ENCODE measurements at regions of chr22 and their contacts with region 1.

Region 1: DNA sequence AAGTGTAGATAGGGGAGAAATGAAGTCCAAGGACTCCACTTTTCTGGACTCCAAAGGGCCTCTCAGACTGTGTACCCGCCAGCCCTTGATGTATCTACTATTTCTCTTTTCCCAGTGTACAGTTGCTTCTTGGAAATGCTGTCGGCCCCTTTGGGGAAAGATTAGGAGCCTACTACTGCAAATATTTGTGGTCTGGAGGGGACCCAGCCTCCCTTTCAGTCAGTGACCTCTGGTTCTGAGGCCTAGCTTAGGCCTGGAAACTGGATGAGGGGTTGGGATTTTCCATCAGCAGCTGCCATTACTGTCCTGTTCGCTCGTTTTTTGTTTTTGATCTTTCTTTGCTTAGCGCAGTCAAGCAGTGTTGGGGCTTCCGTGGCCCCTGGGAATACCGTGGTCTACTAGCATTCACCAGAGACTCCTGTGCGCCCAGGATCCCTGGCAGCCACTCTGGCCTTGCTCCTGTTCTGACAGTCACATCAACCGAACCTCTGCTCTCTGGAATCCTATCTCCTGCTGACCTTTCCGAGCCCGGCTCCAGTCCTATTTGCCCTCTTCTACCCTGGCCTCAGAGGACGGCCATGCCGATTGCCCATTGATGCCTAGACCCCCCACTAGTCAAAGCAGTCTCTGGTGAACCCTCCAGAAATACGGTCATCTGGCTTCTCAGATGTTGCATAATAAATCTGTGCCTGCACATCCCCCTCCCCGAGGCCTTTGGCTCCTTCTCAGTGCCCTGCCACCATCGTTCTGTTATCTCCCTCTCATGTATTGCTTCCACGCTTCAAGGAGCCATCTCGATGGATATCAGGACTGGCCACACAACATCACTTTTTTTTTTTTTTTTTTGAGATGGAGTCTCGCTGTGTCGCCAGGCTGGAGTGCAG is 1.3 kb upstream of the RRP7A start:
- DNase-seq: no peak
- ATAC-seq: no peak
- H3K4me3 Mint-ChIP-seq: no peak overlapping the region
- H3K27ac Mint-ChIP-seq: no peak overlapping the region
- H3K4me1 Mint-ChIP-seq: peaks cover 9% of the 10 kb centered on the region
- H3K27me3 Mint-ChIP-seq: no peaks in the 10 kb centered on the region

Region 2: DNA sequence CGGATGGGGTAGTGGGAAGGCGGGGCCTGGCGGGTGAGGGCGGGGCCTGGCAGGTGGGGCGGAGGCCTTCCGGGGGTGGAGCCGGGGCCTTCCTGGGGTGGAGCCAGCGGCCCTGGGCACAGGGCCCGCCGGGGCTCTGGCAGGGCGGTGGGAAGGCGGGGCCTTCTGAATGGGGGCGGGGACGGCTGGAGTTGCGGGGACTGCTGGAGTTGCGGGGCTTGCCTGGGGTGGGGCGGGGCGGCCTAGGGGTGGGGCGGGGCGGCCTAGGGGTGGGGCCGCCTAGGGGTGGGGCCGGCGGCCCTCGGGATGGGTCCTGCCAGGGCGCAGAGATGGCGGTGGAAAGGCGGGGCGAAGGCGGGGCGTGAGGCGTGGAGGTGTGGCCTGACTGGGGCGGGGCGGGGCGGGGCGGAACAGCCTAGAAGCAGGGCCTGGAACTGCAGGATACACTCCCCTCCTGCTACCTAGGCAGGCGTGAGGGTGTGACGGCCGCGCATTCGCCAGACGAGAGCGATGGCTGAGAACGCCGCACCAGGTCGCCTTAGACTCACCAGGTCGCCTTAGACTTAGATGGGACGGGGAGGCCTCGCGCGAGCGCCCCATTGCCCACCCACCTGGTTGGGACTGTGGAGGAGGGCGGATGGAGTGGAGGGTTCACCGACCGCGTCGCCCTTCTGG is 20.6 kb before region 1 on chr22:
- CTCF ChIA-PET with region 1: no interaction called
- POLR2A ChIA-PET with region 1: no interaction called
- intact Hi-C with region 1: loop called in 1 of 2 experiments (anchors 2 kb)
- DNase-seq: peak; percentile 91
- ATAC-seq: peak; percentile 98
- H3K4me3 Mint-ChIP-seq: peak overlapping the region; percentile 38
- H3K27ac Mint-ChIP-seq: no peak overlapping the region
- H3K4me1 Mint-ChIP-seq: peaks cover 11% of the 10 kb centered on the region
- H3K27me3 Mint-ChIP-seq: no peaks in the 10 kb centered on the region

Region 3: DNA sequence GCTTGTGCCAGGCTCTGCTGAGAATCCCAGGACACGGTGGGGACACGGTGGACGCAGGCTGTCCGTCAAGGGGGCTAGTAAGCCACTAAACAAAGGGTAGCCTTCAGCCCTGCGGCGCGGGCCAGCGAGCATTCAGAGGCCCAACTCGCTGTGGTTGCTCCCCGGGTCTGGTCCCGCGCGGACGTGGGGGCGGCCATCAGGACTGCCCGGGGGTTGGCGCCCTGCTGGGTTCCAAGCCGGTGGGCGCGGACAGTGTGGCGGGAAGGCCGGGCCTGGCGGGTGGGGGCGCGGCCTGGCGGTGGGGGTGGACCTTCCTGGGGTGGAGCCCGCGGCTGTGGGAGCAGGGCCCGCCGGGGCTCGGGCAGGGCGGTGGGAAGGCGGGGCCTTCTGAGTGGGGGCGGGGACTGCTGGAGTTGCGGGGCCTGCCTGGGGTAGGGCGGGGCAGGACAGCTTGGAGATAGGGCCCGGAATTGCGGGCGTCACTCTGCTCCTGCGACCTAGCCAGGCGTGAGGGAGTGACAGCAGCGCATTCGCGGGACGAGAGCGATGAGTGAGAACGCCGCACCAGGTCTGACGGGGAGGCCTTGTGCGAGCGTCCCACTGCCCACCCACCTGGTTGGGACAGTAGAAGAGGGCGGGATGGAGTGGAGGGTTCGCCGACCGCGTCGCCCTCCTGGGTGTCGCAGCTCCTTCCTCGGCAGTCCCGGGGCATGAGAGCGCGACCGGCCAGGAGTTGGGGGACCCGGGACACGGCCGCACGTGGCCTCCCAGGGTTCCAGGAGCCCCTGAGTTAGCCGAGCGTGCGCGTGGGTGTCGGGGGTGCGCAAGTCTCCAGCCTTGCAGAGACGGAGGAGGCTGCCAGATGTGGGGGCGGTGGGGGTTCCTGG is 32.8 kb after region 1 on chr22 and contains the start of gene SERHL2:
- CTCF ChIA-PET with region 1: no interaction called
- POLR2A ChIA-PET with region 1: no interaction called
- intact Hi-C with region 1: loop called in 1 of 2 experiments (anchors 2 kb)
- DNase-seq: peak; percentile 91
- ATAC-seq: peak; percentile 99
- H3K4me3 Mint-ChIP-seq: peak within 1 kb of the TSS; percentile 69
- H3K27ac Mint-ChIP-seq: peak within 1 kb of the TSS; percentile 51
- H3K4me1 Mint-ChIP-seq: peaks cover 6% of the 10 kb centered on the region
- H3K27me3 Mint-ChIP-seq: no peaks in the 10 kb centered on the region
- total RNA-seq, gene SERHL2: 0.78 to 2.1 TPM

Region 4: DNA sequence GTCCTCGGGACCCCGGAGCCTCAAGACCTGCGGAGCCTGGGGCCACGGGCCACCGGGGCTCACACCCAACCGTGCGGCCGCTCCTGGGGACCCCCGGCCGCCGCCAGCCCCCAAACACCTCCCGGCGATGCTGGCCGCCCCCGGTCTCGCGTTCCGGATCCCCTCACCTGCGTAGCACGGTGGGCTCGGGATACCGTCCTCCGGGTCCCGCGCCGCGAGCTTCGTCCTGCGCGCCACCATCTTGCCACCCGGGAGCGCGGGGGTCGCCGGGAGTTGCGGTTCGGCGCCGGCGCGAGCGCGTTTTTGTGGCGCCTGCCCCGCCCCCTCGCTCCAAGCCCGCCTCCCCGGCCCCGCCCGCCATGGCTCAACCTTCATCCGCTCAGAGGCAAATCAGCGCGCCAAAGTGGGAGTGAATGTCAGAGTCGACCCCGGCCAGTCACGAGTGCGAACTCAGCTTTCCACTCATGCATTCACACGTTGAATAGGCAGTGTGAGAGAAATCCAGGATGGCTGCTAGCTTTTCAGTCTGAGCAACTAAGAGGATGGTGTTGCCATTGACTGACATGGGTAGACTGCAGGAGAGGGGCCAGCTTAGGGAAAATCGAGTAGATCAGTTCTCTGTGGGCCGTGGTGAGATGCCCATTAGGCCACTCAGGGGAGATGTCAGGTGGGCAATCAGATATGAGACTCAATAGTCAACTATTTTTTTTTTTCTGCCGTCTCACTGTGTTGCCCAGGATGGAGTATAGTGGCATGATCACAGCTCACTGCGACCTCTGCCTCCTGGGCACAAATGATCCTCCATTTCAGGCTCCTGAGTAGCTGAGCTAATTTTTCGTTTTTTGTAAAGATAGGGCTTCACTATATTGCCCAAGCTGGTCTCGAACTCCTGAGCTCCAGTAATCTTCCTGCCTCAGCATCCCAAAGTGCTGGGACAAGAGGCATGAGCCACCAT is 61.1 kb after region 1 on chr22:
- CTCF ChIA-PET with region 1: no interaction called
- POLR2A ChIA-PET with region 1: no interaction called
- intact Hi-C with region 1: loop called in 1 of 2 experiments (anchors 1 kb)
- DNase-seq: peak; percentile 94
- ATAC-seq: peak; percentile 88
- H3K4me3 Mint-ChIP-seq: peak overlapping the region; percentile 94
- H3K27ac Mint-ChIP-seq: peak overlapping the region; percentile 87
- H3K4me1 Mint-ChIP-seq: peaks cover 9% of the 10 kb centered on the region
- H3K27me3 Mint-ChIP-seq: no peaks in the 10 kb centered on the region

Region 5: GRCh38 chr22:42901790-42902508 is 381.0 kb after region 1 on chr22:
- CTCF ChIA-PET with region 1: no interaction called
- POLR2A ChIA-PET with region 1: no interaction called
- intact Hi-C with region 1: no loop called
- DNase-seq: no peak
- ATAC-seq: no peak
- H3K4me3 Mint-ChIP-seq: no peak overlapping the region
- H3K27ac Mint-ChIP-seq: no peak overlapping the region
- H3K4me1 Mint-ChIP-seq: peaks cover 5% of the 10 kb centered on the region
- H3K27me3 Mint-ChIP-seq: no peaks in the 10 kb centered on the region

Measured in activated CD4-positive, alpha-beta T cell treated with anti-CD3 and anti-CD28 coated beads for 36 hours (primary cell).